HEK293T (cell line): ENCODE measurements at regions of chr20 and their contacts with region 1.

Region 1: DNA sequence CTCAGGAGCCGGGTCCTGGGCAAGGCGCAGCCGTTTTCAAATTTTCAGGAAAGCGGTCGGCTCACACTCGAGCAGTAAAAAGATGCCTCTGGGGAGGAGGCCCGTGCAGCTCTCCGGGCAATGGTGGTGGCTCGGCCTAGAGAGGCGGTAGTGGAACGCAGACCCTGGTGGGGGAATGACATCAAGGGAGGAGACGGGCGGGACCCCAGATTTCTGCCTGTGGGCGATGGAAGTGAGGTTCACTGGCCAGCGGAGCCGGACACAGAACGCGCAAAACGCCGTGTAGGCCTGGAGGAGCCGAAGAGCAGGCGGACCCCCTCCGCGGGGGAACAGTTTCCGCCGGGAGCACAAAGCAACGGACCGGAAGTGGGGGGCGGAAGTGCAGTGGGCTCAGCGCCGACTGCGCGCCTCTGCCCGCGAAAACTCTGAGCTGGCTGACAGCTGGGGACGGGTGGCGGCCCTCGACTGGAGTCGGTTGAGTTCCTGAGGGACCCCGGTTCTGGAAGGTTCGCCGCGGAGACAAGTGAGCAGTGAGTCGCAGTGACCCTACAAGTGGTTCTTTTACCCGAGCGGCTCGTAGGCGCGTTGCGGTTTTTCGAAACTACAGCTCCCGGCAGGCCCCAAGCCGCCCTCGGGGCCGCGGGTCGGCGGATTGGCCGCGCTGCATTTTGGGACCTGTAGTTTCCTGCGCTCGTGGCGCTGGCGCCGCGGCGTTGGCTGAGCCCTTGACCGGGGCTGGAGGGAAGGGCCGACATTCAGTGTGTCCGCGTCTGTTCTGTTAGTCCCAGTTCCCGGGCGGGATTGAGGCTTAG is at the start of gene RTEL1:
- DNase-seq: peak; percentile 95

Region 2: DNA sequence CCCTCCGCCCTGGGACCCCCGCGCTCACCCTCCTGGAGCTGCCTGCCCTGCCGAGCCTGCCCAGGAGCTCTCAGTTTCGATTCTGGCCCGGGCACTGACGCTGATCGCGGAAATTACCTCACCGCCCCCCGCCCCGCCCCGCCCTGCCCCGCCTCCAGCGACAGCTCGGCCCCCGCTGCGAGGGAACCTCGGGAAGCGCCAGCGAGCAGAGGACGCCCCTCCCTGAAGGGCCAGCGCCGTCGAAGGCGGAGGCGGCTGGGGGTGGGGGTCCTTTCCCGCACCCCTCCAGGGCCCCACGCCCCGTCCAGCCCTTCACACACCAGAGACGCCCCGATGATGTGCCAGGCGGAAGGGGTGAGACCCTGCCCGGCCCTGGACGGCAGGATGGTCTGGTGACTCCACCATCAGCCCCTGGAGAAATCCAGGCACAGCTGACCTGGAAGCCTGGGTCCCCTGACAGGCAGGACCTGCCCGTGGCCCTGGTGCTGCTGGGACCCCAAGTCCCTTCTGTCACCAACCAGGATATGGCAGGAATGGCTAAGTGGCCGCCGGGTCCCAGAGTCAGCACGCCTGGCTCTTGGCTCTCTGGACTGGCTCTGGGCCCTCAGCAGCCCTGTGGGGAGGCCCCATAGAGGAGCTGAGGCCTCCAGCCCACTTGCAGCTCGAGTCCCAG is 83.9 kb before region 1 on chr20 and contains the start of gene HELZ2:
- CTCF ChIA-PET with region 1: no interaction called
- POLR2A ChIA-PET with region 1: interaction called, 10 read pairs
- DNase-seq: peak; percentile 78

Region 3: DNA sequence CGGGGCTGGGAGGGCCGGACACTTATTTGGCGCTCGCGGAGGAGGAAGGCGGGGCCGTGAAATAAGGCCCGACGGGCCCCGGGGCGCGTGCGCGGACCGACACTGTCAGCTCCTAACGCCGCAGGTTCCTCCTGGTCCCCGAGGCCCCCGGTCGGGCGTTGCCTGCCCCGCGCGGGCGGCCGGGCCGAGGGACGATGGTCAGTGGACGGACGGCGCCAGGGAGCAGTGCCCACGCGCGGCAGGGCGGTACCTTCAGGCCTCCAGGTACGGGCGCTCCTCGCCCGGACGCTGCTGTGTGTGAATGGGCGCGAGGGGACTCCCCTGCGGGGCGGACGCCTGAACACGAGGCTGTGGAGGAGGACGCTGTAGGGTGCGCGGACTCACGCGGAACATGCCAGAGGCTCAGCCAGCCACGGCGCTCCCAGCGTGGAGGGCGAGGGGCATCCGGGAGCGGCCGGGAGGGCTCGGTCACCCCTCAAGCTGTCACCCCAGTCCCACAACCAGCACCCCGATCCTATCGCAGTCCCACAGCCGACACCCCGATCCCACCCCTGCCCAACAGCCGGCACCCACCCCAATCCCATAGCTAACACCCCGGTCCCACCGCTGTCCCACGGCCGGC is 30.9 kb before region 1 on chr20:
- CTCF ChIA-PET with region 1: no interaction called
- POLR2A ChIA-PET with region 1: interaction called, 14 read pairs
- DNase-seq: peak; percentile 95

Region 4: GRCh38 chr20:63641792-63642544 is 16.2 kb before region 1 on chr20:
- CTCF ChIA-PET with region 1: interaction called, 3 read pairs
- POLR2A ChIA-PET with region 1: interaction called, 25 read pairs
- DNase-seq: peak; percentile 98